Activated B cell treated with CpG ODN at 0.5 μM for 24 hours (primary cell): ENCODE measurements at regions of chr6 and their contacts with region 1.

Region 1: DNA sequence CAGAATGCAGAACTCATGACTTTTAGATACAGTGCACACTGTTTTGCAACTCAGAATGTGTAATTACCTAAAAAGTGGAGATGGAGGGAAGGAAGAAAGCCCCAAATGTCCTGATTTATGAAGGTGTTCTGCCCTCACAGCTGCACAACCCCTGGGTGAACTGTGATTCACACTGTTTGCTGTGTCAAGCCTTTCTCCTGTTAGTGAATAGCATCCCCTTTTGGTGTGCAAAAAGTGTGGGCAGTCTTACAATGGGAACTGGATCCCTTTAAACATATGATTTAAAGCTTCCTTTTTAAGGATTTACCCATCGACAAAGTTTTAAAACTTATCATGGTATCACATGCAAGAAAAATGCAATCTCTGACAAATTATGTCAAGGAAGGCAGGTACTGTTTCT is 633.4 kb upstream of the EPHA7 start:
- DNase-seq: no peak
- ATAC-seq: no peak
- H3K4me3 Mint-ChIP-seq: no peak overlapping the region
- H3K27ac Mint-ChIP-seq: no peak overlapping the region
- H3K4me1 Mint-ChIP-seq: no peaks in the 10 kb centered on the region
- H3K27me3 Mint-ChIP-seq: no peaks in the 10 kb centered on the region
- CTCF ChIP-seq: no peak

Region 2: GRCh38 chr6:94133106-94133505 is 80.4 kb after region 1 on chr6:
- CTCF ChIA-PET with region 1: no interaction called
- POLR2A ChIA-PET with region 1: interaction called, 14 read pairs
- intact Hi-C with region 1: no loop called
- DNase-seq: no peak
- ATAC-seq: no peak
- H3K4me3 Mint-ChIP-seq: no peak overlapping the region
- H3K27ac Mint-ChIP-seq: no peak overlapping the region
- H3K4me1 Mint-ChIP-seq: no peaks in the 10 kb centered on the region
- H3K27me3 Mint-ChIP-seq: no peaks in the 10 kb centered on the region
- CTCF ChIP-seq: no peak